PC-3 (cell line): ENCODE measurements at regions of chr2 and their contacts with region 1.

Region 1: GRCh38 chr2:225566798-225567197 is 167.3 kb downstream of the NYAP2 start:
- DNase-seq: peak; percentile 26
- ATAC-seq: no peak
- H3K4me3 ChIP-seq: no peak overlapping the region
- H3K27ac ChIP-seq: no peak overlapping the region
- H3K4me1 ChIP-seq: no peaks in the 10 kb centered on the region
- H3K27me3 ChIP-seq: peaks cover 28% of the 10 kb centered on the region
- CTCF ChIP-seq: no peak

Region 2: DNA sequence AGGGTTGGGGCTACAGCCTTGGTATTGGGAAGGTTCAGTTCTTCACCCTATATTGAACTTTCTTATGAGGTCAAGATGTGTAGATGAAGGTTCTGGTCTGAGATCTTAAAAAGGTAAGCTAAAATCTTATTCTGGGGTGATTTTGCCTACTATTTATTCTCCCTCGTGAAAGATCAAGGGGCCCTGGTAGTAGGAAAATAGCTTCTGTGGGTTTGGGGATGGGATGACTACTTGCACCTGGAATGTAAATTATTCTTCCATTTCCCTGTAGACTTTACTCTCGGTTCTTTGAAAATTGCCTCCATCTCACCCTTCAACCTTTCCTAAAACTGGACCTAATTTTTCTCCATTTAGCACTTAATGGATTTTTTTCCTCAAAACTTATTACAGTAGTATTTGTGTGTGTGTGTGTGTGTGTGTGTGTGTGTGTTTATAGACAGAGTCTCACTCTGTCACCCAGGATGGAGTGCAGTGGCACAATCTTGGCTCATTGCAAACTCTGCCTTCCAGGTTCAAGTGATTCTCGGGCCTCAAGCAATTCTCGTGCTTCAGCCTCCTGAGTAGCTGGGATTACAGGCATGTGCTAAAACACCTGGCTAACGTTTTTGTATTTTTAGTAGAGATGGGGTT is 888.0 kb before region 1 on chr2:
- CTCF ChIA-PET with region 1: no interaction called
- POLR2A ChIA-PET with region 1: no interaction called
- intact Hi-C with region 1: no loop called
- DNase-seq: peak; percentile 71
- ATAC-seq: peak; percentile 76
- H3K4me3 ChIP-seq: peak overlapping the region; percentile 41
- H3K27ac ChIP-seq: peak overlapping the region; percentile 80
- H3K4me1 ChIP-seq: peaks cover 20% of the 10 kb centered on the region
- H3K27me3 ChIP-seq: no peaks in the 10 kb centered on the region
- CTCF ChIP-seq: no peak

Region 3: GRCh38 chr2:225616370-225616769 is 49.6 kb after region 1 on chr2:
- CTCF ChIA-PET with region 1: no interaction called
- POLR2A ChIA-PET with region 1: interaction called, 12 read pairs
- intact Hi-C with region 1: no loop called
- DNase-seq: no peak
- ATAC-seq: no peak
- H3K4me3 ChIP-seq: no peak overlapping the region
- H3K27ac ChIP-seq: no peak overlapping the region
- H3K4me1 ChIP-seq: no peaks in the 10 kb centered on the region
- H3K27me3 ChIP-seq: no peaks in the 10 kb centered on the region
- CTCF ChIP-seq: no peak